ENCODE measurements at regions of chr2 and their contacts with region 1.

Region 1: GRCh38 chr2:54570925-54571694 is 115.0 kb downstream of the SPTBN1 start:
- DNase-seq: peak; percentile 63 to 87 (median 72)
- H3K4me3 ChIP-seq: peak overlapping the region in 1 of 2 donors; percentile 11
- H3K4me3 Mint-ChIP-seq: peak overlapping the region; percentile 43 to 95 (median 80)
- H3K27ac ChIP-seq: peak overlapping the region; percentile 94
- H3K27ac Mint-ChIP-seq: peak overlapping the region; percentile 93 to 99 (median 99)
- H3K4me1 ChIP-seq: peaks cover 96% of the 10 kb centered on the region
- H3K4me1 Mint-ChIP-seq: peaks cover 64 to 99% (median 84%) of the 10 kb centered on the region in 4 donors
- H3K27me3 ChIP-seq: no peaks in the 10 kb centered on the region
- H3K27me3 Mint-ChIP-seq: no peaks in the 10 kb centered on the region

Region 2: GRCh38 chr2:54503192-54503591 is 67.9 kb before region 1 on chr2:
- CTCF ChIA-PET with region 1: no interaction called
- POLR2A ChIA-PET with region 1: no interaction called
- intact Hi-C with region 1: no loop called
- DNase-seq: peak in 2 of 5 donors; percentile 10 to 19
- H3K4me3 ChIP-seq: no peak overlapping the region
- H3K4me3 Mint-ChIP-seq: no peak overlapping the region
- H3K27ac ChIP-seq: no peak overlapping the region
- H3K27ac Mint-ChIP-seq: no peak overlapping the region
- H3K4me1 ChIP-seq: no peaks in the 10 kb centered on the region
- H3K4me1 Mint-ChIP-seq: no peaks in the 10 kb centered on the region
- H3K27me3 ChIP-seq: no peaks in the 10 kb centered on the region
- H3K27me3 Mint-ChIP-seq: no peaks in the 10 kb centered on the region

Region 3: DNA sequence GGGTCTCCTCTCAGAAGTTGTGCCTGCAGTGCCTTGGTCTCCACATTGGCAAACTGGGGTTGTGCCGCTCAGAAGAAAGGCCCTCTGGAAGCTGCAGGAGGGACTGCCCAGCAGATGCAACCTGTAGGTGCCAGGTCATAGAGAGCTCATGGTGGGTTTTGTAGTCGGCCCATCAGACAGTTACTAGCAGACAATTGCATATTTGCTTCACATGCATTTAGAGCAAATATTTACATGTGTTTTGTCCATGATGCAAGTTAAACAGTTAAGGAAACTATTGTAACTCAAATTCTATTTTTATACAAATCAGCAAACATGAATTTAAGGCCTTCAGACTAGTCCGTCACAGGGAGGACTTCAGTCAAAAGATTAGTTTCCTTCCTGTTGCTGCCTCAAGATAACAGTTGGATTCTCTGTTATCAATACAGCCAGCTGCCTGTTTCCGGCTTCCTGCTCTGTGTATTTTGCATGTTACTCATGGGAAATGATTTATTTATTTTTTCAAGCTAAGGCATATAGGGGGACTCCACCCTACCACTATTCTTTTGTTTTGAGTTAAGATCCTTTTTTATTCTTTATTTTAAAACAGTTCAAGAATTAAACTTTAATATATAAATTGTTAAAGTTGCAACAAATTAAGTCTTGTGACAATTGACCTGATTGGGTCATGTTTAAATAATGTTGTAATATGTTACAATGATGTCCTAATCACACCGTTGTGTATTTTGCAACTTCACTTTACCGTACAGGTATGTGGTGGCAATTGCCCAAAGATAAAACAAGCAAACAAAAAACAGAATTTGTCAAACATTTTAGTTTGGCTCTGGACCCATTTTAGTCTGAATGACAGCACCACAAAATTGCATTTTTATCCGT is 18.5 kb after region 1 on chr2:
- CTCF ChIA-PET with region 1: interaction called, 18 read pairs
- POLR2A ChIA-PET with region 1: interaction called, 136 read pairs
- intact Hi-C with region 1: loop called (anchors 1 kb)
- DNase-seq: peak; percentile 47 to 73 (median 50)
- H3K4me3 ChIP-seq: peak overlapping the region in 1 of 2 donors; percentile 13
- H3K4me3 Mint-ChIP-seq: peak overlapping the region; percentile 42 to 82 (median 66)
- H3K27ac ChIP-seq: peak overlapping the region; percentile 54
- H3K27ac Mint-ChIP-seq: peak overlapping the region; percentile 89 to 95 (median 91)
- H3K4me1 ChIP-seq: peaks cover 88% of the 10 kb centered on the region
- H3K4me1 Mint-ChIP-seq: peaks cover 64 to 88% (median 78%) of the 10 kb centered on the region in 4 donors
- H3K27me3 ChIP-seq: no peaks in the 10 kb centered on the region
- H3K27me3 Mint-ChIP-seq: no peaks in the 10 kb centered on the region

Region 4: GRCh38 chr2:54597153-54597848 is 26.2 kb after region 1 on chr2:
- CTCF ChIA-PET with region 1: interaction called, 8 read pairs
- POLR2A ChIA-PET with region 1: interaction called, 136 read pairs
- intact Hi-C with region 1: loop called (anchors 2 kb)
- DNase-seq: peak in 1 of 5 donors; percentile 32
- H3K4me3 ChIP-seq: peak overlapping the region in 1 of 2 donors; percentile 18
- H3K4me3 Mint-ChIP-seq: peak overlapping the region; percentile 52 to 90 (median 86)
- H3K27ac ChIP-seq: peak overlapping the region; percentile 48
- H3K27ac Mint-ChIP-seq: peak overlapping the region; percentile 92 to 98 (median 97)
- H3K4me1 ChIP-seq: peaks cover 89% of the 10 kb centered on the region
- H3K4me1 Mint-ChIP-seq: peaks cover 64 to 87% (median 83%) of the 10 kb centered on the region in 4 donors
- H3K27me3 ChIP-seq: no peaks in the 10 kb centered on the region
- H3K27me3 Mint-ChIP-seq: no peaks in the 10 kb centered on the region

Region 5: GRCh38 chr2:54606393-54606969 is 35.4 kb after region 1 on chr2:
- CTCF ChIA-PET with region 1: interaction called, 5 read pairs
- POLR2A ChIA-PET with region 1: interaction called, 16 read pairs
- intact Hi-C with region 1: loop called (anchors 2 kb)
- DNase-seq: peak in 1 of 5 donors; percentile 52
- H3K4me3 ChIP-seq: no peak overlapping the region
- H3K4me3 Mint-ChIP-seq: peak overlapping the region in 7 of 8 donors; percentile 27 to 74 (median 63)
- H3K27ac ChIP-seq: no peak overlapping the region
- H3K27ac Mint-ChIP-seq: peak overlapping the region in 6 of 7 donors; percentile 63 to 93 (median 81)
- H3K4me1 ChIP-seq: peaks cover 66% of the 10 kb centered on the region
- H3K4me1 Mint-ChIP-seq: peaks cover 68 to 88% (median 81%) of the 10 kb centered on the region in 4 donors
- H3K27me3 ChIP-seq: no peaks in the 10 kb centered on the region
- H3K27me3 Mint-ChIP-seq: no peaks in the 10 kb centered on the region

Region 6: GRCh38 chr2:54618646-54619565 is 47.8 kb after region 1 on chr2:
- CTCF ChIA-PET with region 1: interaction called, 3 read pairs
- POLR2A ChIA-PET with region 1: interaction called, 4 read pairs
- intact Hi-C with region 1: loop called (anchors 2 kb)
- DNase-seq: no peak
- H3K4me3 ChIP-seq: no peak overlapping the region
- H3K4me3 Mint-ChIP-seq: peak overlapping the region in 3 of 8 donors; percentile 3 to 46 (median 37)
- H3K27ac ChIP-seq: no peak overlapping the region
- H3K27ac Mint-ChIP-seq: peak overlapping the region; percentile 10 to 89 (median 68)
- H3K4me1 ChIP-seq: peaks cover 17% of the 10 kb centered on the region
- H3K4me1 Mint-ChIP-seq: peaks cover 19 to 36% (median 24%) of the 10 kb centered on the region in 4 donors
- H3K27me3 ChIP-seq: no peaks in the 10 kb centered on the region
- H3K27me3 Mint-ChIP-seq: no peaks in the 10 kb centered on the region

Region 7: GRCh38 chr2:54634564-54635511 is 63.7 kb after region 1 on chr2:
- CTCF ChIA-PET with region 1: no interaction called
- POLR2A ChIA-PET with region 1: interaction called, 7 read pairs
- intact Hi-C with region 1: loop called (anchors 2 kb)
- DNase-seq: peak in 4 of 5 donors; percentile 5 to 33 (median 18)
- H3K4me3 ChIP-seq: no peak overlapping the region
- H3K4me3 Mint-ChIP-seq: peak overlapping the region in 7 of 8 donors; percentile 18 to 66 (median 50)
- H3K27ac ChIP-seq: no peak overlapping the region
- H3K27ac Mint-ChIP-seq: peak overlapping the region; percentile 68 to 88 (median 76)
- H3K4me1 ChIP-seq: peaks cover 14% of the 10 kb centered on the region
- H3K4me1 Mint-ChIP-seq: peaks cover 21 to 50% (median 26%) of the 10 kb centered on the region in 4 donors
- H3K27me3 ChIP-seq: no peaks in the 10 kb centered on the region
- H3K27me3 Mint-ChIP-seq: no peaks in the 10 kb centered on the region

Region 8: GRCh38 chr2:54652540-54652939 is 81.4 kb after region 1 on chr2:
- CTCF ChIA-PET with region 1: no interaction called
- POLR2A ChIA-PET with region 1: no interaction called
- intact Hi-C with region 1: loop called (anchors 5 kb)
- DNase-seq: no peak
- H3K4me3 ChIP-seq: no peak overlapping the region
- H3K4me3 Mint-ChIP-seq: no peak overlapping the region
- H3K27ac ChIP-seq: no peak overlapping the region
- H3K27ac Mint-ChIP-seq: peak overlapping the region in 2 of 7 donors; percentile 9 to 48
- H3K4me1 ChIP-seq: no peaks in the 10 kb centered on the region
- H3K4me1 Mint-ChIP-seq: peaks cover 0 to 5% (median 2%) of the 10 kb centered on the region in 4 donors
- H3K27me3 ChIP-seq: no peaks in the 10 kb centered on the region
- H3K27me3 Mint-ChIP-seq: no peaks in the 10 kb centered on the region

Measured in CD4-positive, alpha-beta memory T cell (primary cell).